Right ventricle myocardium inferior (tissue), 1 donor: ENCODE measurements at regions of chr16 and their contacts with region 1.

Region 1: DNA sequence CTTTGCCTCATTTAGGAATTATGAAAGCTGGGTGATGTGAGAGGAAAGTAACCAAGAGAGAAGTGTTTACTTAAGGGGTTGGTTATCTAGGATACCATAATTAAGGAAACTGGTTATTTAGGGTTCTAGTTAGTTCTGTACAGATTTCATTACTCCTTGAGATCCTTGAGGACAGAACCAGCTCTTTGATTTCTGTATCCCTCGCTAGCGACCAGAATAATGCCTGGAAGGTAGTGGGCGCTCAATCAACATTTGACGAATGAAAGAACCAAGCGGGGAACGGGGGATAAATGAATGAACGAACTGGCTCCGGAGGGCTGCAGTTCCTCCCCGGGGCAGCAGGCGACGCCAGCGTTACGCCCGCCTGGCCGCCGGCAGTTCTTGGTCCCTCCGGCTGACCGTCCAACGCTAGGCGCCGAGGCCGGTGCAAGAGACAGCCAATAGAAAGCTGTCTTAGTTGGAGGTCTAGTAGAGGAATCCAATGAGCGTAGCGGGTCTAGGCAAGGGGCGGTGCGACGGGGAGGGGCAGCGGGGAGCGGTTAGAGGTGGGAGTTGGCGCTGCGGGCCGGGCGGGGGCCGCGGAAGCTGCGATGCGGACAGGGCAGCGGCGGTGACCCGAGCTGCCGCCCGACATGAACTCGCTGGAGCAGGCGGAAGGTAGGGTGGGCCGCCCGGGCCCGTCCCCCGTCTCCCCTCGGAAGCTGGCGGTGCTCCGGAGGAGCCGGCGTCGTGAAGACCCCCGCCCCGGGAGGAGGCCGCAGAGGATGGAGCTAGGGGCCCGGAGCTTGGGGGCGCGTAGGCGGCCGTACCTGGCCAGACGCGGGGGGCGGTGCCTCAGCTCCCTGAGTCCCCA is at the start of gene CNEP1R1:
- DNase-seq: peak; percentile 96
- ATAC-seq: peak; percentile 100
- total RNA-seq, gene CNEP1R1: 18.5 TPM

Region 2: DNA sequence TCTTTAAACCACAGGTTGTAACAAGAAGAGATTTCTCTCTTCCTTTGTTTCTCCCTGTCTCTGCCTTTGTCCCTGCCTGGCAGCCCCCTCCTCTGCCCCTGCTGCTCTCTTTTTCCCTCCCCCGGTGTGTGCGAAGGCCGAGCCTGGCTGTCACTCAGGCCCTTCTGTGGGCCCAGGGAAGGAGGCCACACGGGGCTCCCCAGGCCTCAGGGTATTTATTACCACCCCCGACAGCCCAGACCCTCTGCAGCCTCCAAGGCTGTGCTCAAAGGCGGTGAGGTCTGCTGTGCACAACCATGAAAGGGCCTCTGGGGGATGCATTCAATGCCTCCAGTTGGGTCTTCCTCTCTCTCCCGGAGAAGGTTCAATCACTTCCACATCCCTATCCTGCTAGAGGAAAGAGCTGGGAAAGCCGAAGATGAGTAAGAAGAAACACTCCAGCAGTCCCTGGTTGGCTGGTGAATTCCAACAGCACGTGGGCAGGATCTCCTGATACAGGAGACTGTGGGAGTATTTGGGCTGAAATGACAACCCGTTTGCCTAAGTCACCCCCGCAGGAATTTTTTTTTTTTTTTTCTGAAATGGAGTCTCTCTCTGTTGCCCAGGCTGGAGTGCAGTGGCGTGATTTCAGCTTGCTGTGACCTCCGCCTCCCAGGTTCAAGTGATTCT is 203.2 kb before region 1 on chr16:
- intact Hi-C with region 1: no loop called
- DNase-seq: no peak
- ATAC-seq: no peak

Region 3: GRCh38 chr16:50065624-50066481 is 40.9 kb after region 1 on chr16 and contains the start of gene HEATR3:
- intact Hi-C with region 1: loop called (anchors 2 kb)
- DNase-seq: peak; percentile 96
- ATAC-seq: peak; percentile 97
- total RNA-seq, gene HEATR3: 10.1 TPM

Region 4: GRCh38 chr16:50354629-50355456 is 329.9 kb after region 1 on chr16:
- intact Hi-C with region 1: loop called (anchors 5 kb)
- DNase-seq: no peak
- ATAC-seq: no peak

Region 5: DNA sequence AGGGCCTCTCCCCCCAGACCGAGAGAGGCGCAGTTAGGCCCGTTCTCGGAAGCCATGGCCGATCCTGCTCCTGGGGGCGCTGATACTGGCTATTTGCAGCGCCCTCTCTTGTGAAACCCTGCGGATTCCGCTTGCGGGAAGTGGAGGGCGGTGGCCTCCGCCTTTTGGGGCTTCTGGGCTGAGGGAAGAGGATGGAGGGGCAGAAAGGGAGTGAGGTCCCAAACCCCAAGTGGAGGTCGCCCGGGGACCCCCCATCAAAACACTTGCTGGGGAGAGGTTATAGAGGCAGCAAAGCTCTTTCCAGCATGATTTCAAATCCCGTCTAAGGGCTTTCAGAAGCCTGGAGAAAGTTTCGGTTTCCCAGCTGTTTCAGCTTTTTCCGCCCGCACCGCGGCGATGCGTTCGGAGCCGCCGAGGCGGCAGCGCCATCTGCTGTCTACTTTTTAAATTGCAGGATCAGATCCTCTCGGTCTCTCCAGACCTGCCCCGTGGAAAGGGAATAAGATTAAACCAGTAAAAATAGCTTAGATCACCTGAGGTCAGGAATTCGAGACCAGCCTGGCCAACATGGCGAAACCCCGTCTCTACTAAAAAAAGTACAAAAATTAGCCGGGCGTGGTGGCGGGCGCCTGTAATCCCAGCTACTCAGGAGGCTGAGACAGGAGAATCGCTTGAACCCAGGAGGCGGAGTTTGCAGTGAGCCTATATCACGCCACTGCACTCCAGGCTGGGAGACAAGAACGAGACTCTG is 640.4 kb after region 1 on chr16:
- intact Hi-C with region 1: loop called (anchors 5 kb)
- DNase-seq: peak; percentile 88
- ATAC-seq: peak; percentile 86

Region 6: GRCh38 chr16:50806099-50807062 is 781.5 kb after region 1 on chr16:
- intact Hi-C with region 1: loop called (anchors 10 kb)
- DNase-seq: peak; percentile 87
- ATAC-seq: peak; percentile 93